Gastrocnemius medialis (tissue), 4 donors: ENCODE measurements at regions of chr11 and their contacts with region 1.

Region 1: DNA sequence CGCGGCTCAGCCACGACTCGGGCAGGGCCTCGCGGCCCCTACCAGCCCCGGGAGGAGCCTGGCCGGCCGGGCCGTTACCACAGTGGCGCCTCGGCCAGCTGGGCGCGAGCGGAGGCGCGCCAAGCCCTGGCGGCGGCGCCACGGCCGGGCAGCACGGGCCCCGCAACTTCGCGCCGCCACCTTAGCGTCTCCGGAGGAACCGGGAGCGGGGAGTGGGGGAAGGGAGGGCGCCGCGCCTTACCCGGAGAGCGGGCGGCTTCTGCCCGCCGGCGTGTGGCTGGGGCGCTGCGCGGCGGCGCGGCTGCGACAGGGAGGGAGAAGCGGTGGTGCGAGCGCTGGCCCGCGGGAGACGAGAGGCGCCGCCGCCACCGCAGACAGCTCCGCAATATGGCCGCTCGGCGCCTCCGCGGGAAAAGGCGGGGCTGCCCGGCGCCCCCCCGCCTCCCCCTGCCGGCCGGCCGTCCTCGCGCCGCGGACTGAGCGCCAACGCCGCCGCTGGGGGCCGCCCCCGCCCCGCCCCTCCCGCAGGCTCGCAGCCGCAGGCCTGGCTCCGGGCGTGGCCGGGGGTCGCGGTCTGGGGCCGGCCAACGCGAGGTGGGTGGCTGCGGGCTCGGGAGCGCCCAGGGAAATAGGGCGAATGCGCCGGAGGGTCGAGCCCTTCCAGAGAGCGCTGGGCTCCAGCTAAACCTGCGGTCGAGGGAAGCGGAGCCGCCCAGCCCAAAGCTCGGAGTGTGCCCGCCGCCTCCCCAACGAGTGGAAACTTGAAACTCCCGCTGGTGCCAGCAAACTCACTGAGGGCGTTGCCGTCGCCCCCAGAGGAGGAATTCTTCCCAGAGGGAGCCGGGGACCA is at the start of gene RDX:
- DNase-seq: peak; percentile 47 to 78
- ATAC-seq: peak; percentile 91 to 96
- H3K4me3 ChIP-seq: peak within 1 kb of the TSS; percentile 77 to 96 (median 88)
- H3K27ac ChIP-seq: peak within 1 kb of the TSS; percentile 93 to 99 (median 96)
- H3K4me1 ChIP-seq: peaks cover 31 to 33% of the 10 kb centered on the region in 2 donors
- H3K27me3 ChIP-seq: no peaks in the 10 kb centered on the region
- CTCF ChIP-seq: peak in 2 of 5 experiments; percentile 34 to 35
- POLR2A ChIP-seq: peak; percentile 81 to 84
- total RNA-seq, gene RDX: 95.7 to 140 (median 115) TPM

Region 2: GRCh38 chr11:110251837-110252236 is 44.6 kb before region 1 on chr11:
- in situ Hi-C with region 1: no loop called
- intact Hi-C with region 1: loop called (anchors 2 kb)
- DNase-seq: peak; percentile 27 to 76
- ATAC-seq: peak; percentile 99
- H3K4me3 ChIP-seq: no peak overlapping the region
- H3K27ac ChIP-seq: peak overlapping the region; percentile 63 to 81 (median 74)
- H3K4me1 ChIP-seq: peaks cover 20 to 21% of the 10 kb centered on the region in 2 donors
- H3K27me3 ChIP-seq: no peaks in the 10 kb centered on the region
- CTCF ChIP-seq: no peak
- POLR2A ChIP-seq: no peak

Region 3: GRCh38 chr11:110429731-110430266 is 133.3 kb after region 1 on chr11 and contains the start of gene FDX1:
- in situ Hi-C with region 1: no loop called
- intact Hi-C with region 1: loop called (anchors 2 kb)
- DNase-seq: peak; percentile 53 to 73
- ATAC-seq: peak; percentile 91 to 92
- H3K4me3 ChIP-seq: peak within 1 kb of the TSS; percentile 62 to 88 (median 68)
- H3K27ac ChIP-seq: peak within 1 kb of the TSS; percentile 85 to 92 (median 90)
- H3K4me1 ChIP-seq: peaks cover 21 to 24% of the 10 kb centered on the region in 2 donors
- H3K27me3 ChIP-seq: no peaks in the 10 kb centered on the region
- CTCF ChIP-seq: peak in 4 of 5 experiments; percentile 75 to 90 (median 83)
- POLR2A ChIP-seq: peak; percentile 68 to 80
- total RNA-seq, gene FDX1: 13.3 to 25.0 (median 21.3) TPM